ENCODE measurements at regions of chr17 and their contacts with region 1.

Region 1: GRCh38 chr17:42720996-42721583 is 23.8 kb downstream of the EZH1 start:
- DNase-seq: peak in 1 of 2 donors; percentile 81
- ATAC-seq: peak; percentile 80 to 84 (median 81)
- H3K4me3 ChIP-seq: no peak overlapping the region
- H3K4me3 Mint-ChIP-seq: no peak overlapping the region
- H3K27ac ChIP-seq: no peak overlapping the region
- H3K27ac Mint-ChIP-seq: no peak overlapping the region
- H3K4me1 ChIP-seq: no peaks in the 10 kb centered on the region
- H3K4me1 Mint-ChIP-seq: no peaks in the 10 kb centered on the region
- H3K27me3 ChIP-seq: no peaks in the 10 kb centered on the region
- H3K27me3 Mint-ChIP-seq: no peaks in the 10 kb centered on the region
- CTCF ChIP-seq: peak; percentile 65

Region 2: DNA sequence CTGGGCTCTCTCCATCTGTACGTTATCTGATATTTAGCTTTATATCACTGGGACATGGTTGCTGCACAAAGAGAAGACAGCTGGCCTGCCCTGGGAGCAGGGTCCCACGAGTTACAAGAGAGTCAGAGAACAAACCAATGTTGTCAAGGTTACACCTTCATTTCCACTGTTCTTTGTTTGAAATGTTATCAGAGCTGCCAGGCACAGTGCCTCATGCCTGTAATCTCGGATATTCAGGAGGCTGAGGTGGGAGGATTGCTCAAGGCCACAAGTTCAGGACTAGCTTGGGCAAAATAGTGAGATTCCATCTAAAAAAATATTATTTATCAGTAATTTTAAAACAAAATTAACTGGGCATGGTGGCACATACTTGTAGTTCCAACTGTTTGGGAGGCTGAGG is 227.8 kb before region 1 on chr17:
- intact Hi-C with region 1: no loop called
- DNase-seq: no peak
- ATAC-seq: no peak
- H3K4me3 ChIP-seq: no peak overlapping the region
- H3K4me3 Mint-ChIP-seq: no peak overlapping the region
- H3K27ac ChIP-seq: no peak overlapping the region
- H3K27ac Mint-ChIP-seq: no peak overlapping the region
- H3K4me1 ChIP-seq: peaks cover 15% of the 10 kb centered on the region
- H3K4me1 Mint-ChIP-seq: peaks cover 18% of the 10 kb centered on the region in 2 donors
- H3K27me3 ChIP-seq: peaks cover 13% of the 10 kb centered on the region
- H3K27me3 Mint-ChIP-seq: peaks cover 25 to 33% of the 10 kb centered on the region in 2 donors
- CTCF ChIP-seq: no peak

Region 3: DNA sequence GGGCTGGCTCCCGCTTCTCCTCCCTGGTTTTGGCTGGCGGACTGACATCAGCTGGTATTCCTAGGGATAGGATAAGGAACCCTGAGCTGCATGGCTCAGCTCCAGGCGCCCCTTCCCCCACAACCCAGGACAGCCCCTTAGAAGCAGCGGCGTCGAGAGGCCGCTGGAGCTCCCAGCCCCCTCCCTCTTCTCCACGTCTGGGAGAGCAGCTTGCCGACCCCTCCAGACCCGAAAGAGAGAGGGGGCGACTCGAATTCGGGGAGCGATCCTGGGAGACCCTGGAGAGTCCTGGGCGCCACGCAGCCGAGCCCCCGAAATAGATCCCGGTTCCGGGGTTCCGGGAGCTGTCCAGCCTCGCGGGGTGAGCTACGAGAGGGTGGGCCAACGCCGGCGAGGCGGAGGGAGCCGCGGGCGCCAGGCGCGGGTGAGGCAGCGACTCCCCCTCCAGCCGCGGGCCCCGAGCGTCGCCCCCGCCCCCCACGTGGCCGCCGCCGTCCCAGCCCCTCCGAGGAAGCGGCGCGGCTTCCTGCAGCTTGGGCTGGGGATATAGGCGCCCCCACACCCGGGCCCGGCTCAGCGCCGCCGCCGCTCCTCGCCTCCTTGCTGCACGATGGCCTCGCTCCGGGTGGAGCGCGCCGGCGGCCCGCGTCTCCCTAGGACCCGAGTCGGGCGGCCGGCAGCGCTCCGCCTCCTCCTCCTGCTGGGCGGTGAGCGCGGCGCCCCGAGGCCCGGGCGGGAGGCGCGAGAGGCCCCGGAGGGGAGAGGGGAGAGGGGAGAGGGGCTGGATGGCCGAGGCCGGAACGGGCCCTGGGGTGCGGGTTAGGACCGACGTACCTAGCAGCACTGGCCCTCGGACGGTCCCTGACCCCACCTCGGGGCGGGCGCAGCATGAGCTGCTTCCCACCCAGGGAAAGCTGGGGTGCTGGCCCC is 39.8 kb after region 1 on chr17 and contains the start of gene RAMP2:
- intact Hi-C with region 1: loop called (anchors 1 kb)
- DNase-seq: peak in 1 of 2 donors; percentile 40
- ATAC-seq: peak; percentile 28 to 61 (median 49)
- H3K4me3 ChIP-seq: no peak within 1 kb of the TSS
- H3K4me3 Mint-ChIP-seq: peak within 1 kb of the TSS; percentile 52
- H3K27ac ChIP-seq: no peak within 1 kb of the TSS
- H3K27ac Mint-ChIP-seq: no peak within 1 kb of the TSS
- H3K4me1 ChIP-seq: peaks cover 15% of the 10 kb centered on the region
- H3K4me1 Mint-ChIP-seq: peaks cover 0 to 9% of the 10 kb centered on the region in 2 donors
- H3K27me3 ChIP-seq: peaks cover 20% of the 10 kb centered on the region
- H3K27me3 Mint-ChIP-seq: peaks cover 47 to 51% of the 10 kb centered on the region in 2 donors
- CTCF ChIP-seq: no peak
- total RNA-seq, gene RAMP2: not detected

Region 4: GRCh38 chr17:42809250-42809649 is 88.2 kb after region 1 on chr17:
- intact Hi-C with region 1: no loop called
- DNase-seq: no peak
- ATAC-seq: no peak
- H3K4me3 ChIP-seq: no peak overlapping the region
- H3K4me3 Mint-ChIP-seq: no peak overlapping the region
- H3K27ac ChIP-seq: no peak overlapping the region
- H3K27ac Mint-ChIP-seq: peak overlapping the region in 1 of 2 donors; percentile 38
- H3K4me1 ChIP-seq: no peaks in the 10 kb centered on the region
- H3K4me1 Mint-ChIP-seq: no peaks in the 10 kb centered on the region
- H3K27me3 ChIP-seq: no peaks in the 10 kb centered on the region
- H3K27me3 Mint-ChIP-seq: no peaks in the 10 kb centered on the region
- CTCF ChIP-seq: no peak

Region 5: DNA sequence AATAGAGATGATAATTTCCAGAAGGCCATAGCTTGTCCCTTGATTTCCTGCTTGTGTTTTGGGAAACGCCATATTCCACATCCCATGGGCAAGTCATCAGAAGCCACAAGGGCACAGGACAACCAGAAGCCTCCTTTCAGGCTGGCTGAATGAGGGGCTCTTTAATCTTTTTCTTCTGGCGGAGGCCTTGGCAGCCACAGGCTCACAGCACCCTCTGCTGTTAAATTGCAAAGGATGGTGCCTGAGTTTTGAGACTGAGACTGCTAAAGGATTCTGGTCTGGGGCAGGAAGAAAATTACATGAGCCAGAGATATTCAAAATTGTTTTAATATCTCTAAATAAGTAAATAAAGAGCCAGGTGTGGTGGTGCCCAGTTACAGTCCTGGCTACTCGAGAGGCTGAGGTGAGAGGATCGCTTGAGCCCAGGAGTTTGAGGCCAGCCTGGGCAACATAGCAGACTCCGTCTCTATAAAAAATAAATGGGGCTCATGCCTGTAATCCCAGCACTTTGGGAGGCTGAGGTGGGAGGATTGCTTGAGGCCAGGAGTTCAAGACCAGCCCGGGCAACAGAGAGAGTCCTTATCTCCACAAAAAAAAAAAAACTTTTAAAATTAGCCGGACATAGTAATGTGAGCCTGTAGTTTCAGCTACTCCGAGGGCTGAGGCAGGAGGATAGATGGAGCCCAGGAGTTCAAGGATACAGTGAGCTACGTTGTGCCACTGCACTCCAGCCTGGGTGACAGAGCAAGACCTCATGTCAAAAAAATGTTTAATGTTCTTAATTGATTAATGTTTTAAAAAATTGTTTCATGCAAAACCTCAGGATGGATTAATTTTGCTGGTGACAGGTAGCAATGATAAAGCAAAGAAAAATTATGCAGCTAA is 216.9 kb after region 1 on chr17:
- intact Hi-C with region 1: loop called (anchors 5 kb)
- DNase-seq: peak in 1 of 2 donors; percentile 48
- ATAC-seq: no peak
- H3K4me3 ChIP-seq: no peak overlapping the region
- H3K4me3 Mint-ChIP-seq: no peak overlapping the region
- H3K27ac ChIP-seq: no peak overlapping the region
- H3K27ac Mint-ChIP-seq: no peak overlapping the region
- H3K4me1 ChIP-seq: no peaks in the 10 kb centered on the region
- H3K4me1 Mint-ChIP-seq: no peaks in the 10 kb centered on the region
- H3K27me3 ChIP-seq: no peaks in the 10 kb centered on the region
- H3K27me3 Mint-ChIP-seq: peaks cover 0 to 4% of the 10 kb centered on the region in 2 donors
- CTCF ChIP-seq: no peak

Measured in natural killer cell (primary cell).